ENCODE measurements at regions of chr16 and their contacts with region 1.

Region 1: GRCh38 chr16:30091474-30092372 is at the start of gene TBX6:
- DNase-seq: peak; percentile 73 to 97
- H3K4me3 ChIP-seq: peak within 1 kb of the TSS; percentile 55 to 84 (median 66)
- H3K27ac ChIP-seq: peak within 1 kb of the TSS; percentile 24; the same call in 1 of the 2 replicates
- H3K4me1 ChIP-seq: peaks cover 0 to 16% (median 10%) of the 10 kb centered on the region in 4 experiments; a peak in 6 of 7 replicates
- H3K27me3 ChIP-seq: 0 out of 7 replicates have a peak, but pooled peaks cover 0 to 3% (median 0%) of the 10 kb centered on the region in 4 experiments
- CTCF ChIP-seq: peak; percentile 75 to 76 (median 76)
- EP300 ChIP-seq: no peak
- POLR2A ChIP-seq: peak in 1 of 2 experiments; percentile 8; a peak in 1 of 3 replicates
- RAD21 ChIP-seq: peak; percentile 60 to 70
- total RNA-seq, gene TBX6: 2.3 and 2.8 TPM in 2 replicates

Region 2: DNA sequence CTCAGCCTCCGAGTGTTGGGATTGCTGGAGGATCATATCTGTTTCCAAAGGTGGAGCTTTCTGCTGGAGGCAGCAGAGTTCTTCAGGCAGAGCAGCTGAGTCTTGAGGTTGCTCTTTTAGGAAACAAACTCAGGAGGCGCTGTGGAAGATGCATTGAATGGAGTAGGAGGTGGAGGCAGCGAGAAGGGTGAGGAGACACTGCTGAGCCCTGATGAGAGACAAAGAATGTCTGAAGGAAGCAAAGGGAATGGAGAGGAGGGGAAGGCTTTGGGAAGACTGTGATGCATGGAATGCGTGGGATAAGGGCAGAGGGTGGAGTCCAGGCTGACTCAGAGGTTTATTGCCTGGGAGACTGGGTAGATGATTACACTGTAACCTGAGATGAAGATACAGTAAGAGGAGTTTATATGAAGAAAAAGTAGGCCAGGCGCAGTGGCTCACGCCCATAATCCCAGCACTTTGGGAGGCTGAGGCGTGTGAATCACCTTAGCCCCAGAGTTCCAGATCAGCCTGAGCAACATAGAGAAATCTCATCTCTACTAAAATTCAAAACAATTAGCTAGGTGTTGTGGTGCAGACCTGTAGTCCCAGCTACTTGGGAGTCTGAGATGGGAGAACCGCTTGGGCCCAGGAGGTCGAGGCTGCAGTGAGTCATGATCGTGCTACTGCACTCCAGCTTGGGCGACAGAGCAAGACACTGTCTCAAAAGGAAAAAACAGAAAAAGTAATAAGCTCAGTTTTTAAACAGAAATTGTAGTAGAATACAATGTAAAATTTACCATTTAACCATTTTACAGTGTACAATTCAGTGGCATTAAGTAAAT is 147.7 kb before region 1 on chr16:
- CTCF ChIA-PET with region 1: no interaction called
- POLR2A ChIA-PET with region 1: no interaction called
- DNase-seq: no peak
- H3K4me3 ChIP-seq: no peak overlapping the region
- H3K27ac ChIP-seq: no peak overlapping the region
- H3K4me1 ChIP-seq: no peaks in the 10 kb centered on the region; a peak in 1 of 7 replicates
- H3K27me3 ChIP-seq: peaks cover 0 to 3% (median 0%) of the 10 kb centered on the region in 4 experiments; a peak in 1 of 7 replicates
- CTCF ChIP-seq: peak; percentile 22 to 67 (median 51)
- EP300 ChIP-seq: no peak
- POLR2A ChIP-seq: no peak
- RAD21 ChIP-seq: peak; percentile 25 to 31; a peak in 2 of 4 replicates

Region 3: GRCh38 chr16:30041846-30042267 is 49.9 kb before region 1 on chr16:
- CTCF ChIA-PET with region 1: interaction called, 19 read pairs
- POLR2A ChIA-PET with region 1: no interaction called
- DNase-seq: no peak
- H3K4me3 ChIP-seq: no peak overlapping the region
- H3K27ac ChIP-seq: no peak overlapping the region
- H3K4me1 ChIP-seq: no peaks in the 10 kb centered on the region
- H3K27me3 ChIP-seq: peaks cover 0 to 6% (median 1%) of the 10 kb centered on the region in 4 experiments; a peak in 3 of 7 replicates
- CTCF ChIP-seq: peak in 2 of 3 experiments; percentile 1 to 41; a peak in 2 of 4 replicates
- EP300 ChIP-seq: no peak
- POLR2A ChIP-seq: no peak
- RAD21 ChIP-seq: peak; percentile 10 to 36; a peak in 2 of 4 replicates

Region 4: GRCh38 chr16:30052671-30053372 is 38.9 kb before region 1 on chr16:
- CTCF ChIA-PET with region 1: interaction called, 10 read pairs
- POLR2A ChIA-PET with region 1: interaction called, 7 read pairs
- DNase-seq: peak in 1 of 2 experiments; percentile 98
- H3K4me3 ChIP-seq: peak overlapping the region; percentile 68 to 80 (median 78)
- H3K27ac ChIP-seq: no peak overlapping the region
- H3K4me1 ChIP-seq: peaks cover 0 to 4% (median 2%) of the 10 kb centered on the region in 4 experiments; a peak in 3 of 7 replicates
- H3K27me3 ChIP-seq: peaks cover 0 to 5% (median 2%) of the 10 kb centered on the region in 4 experiments; a peak in 2 of 7 replicates
- CTCF ChIP-seq: no peak
- EP300 ChIP-seq: peak in 1 of 2 experiments; percentile 51; a peak in 1 of 3 replicates
- POLR2A ChIP-seq: no peak
- RAD21 ChIP-seq: no peak

Region 5: GRCh38 chr16:30065143-30065850 is 26.4 kb before region 1 on chr16 and contains the start of gene ALDOA:
- CTCF ChIA-PET with region 1: interaction called, 51 read pairs
- POLR2A ChIA-PET with region 1: interaction called, 353 read pairs
- DNase-seq: peak; percentile 89 to 92
- H3K4me3 ChIP-seq: peak within 1 kb of the TSS; percentile 71 to 92 (median 88)
- H3K27ac ChIP-seq: peak within 1 kb of the TSS; percentile 84
- H3K4me1 ChIP-seq: peaks cover 6 to 27% (median 15%) of the 10 kb centered on the region in 4 experiments
- H3K27me3 ChIP-seq: no peaks in the 10 kb centered on the region
- CTCF ChIP-seq: no peak
- EP300 ChIP-seq: no peak; a peak in 1 of 3 replicates
- POLR2A ChIP-seq: peak; percentile 93 to 95
- RAD21 ChIP-seq: no peak
- total RNA-seq, gene ALDOA: 1,083 and 1,146 TPM in 2 replicates

Region 6: GRCh38 chr16:30075507-30076275 is 16.0 kb before region 1 on chr16 and contains the start of gene PPP4C:
- CTCF ChIA-PET with region 1: interaction called, 51 read pairs
- POLR2A ChIA-PET with region 1: interaction called, 353 read pairs
- DNase-seq: peak in 1 of 2 experiments; percentile 92
- H3K4me3 ChIP-seq: peak within 1 kb of the TSS; percentile 85 to 95 (median 90)
- H3K27ac ChIP-seq: peak within 1 kb of the TSS; percentile 41
- H3K4me1 ChIP-seq: peaks cover 0 to 7% (median 1%) of the 10 kb centered on the region in 4 experiments; a peak in 2 of 7 replicates
- H3K27me3 ChIP-seq: no peaks in the 10 kb centered on the region
- CTCF ChIP-seq: 0 out of 4 replicates have a peak, but pooled peaks of 1 of the 3 experiments have one; percentile 1
- EP300 ChIP-seq: peak in 1 of 2 experiments; percentile 88; a peak in 2 of 3 replicates
- POLR2A ChIP-seq: peak in 1 of 2 experiments; percentile 84; a peak in 2 of 3 replicates
- RAD21 ChIP-seq: no peak
- total RNA-seq, gene PPP4C: 148 TPM in 2 replicates

Region 7: GRCh38 chr16:30104494-30104968 is 12.8 kb after region 1 on chr16:
- CTCF ChIA-PET with region 1: interaction called, 90 read pairs
- POLR2A ChIA-PET with region 1: interaction called, 169 read pairs
- DNase-seq: no peak
- H3K4me3 ChIP-seq: no peak overlapping the region
- H3K27ac ChIP-seq: no peak overlapping the region
- H3K4me1 ChIP-seq: no peaks in the 10 kb centered on the region
- H3K27me3 ChIP-seq: no peaks in the 10 kb centered on the region
- CTCF ChIP-seq: no peak
- EP300 ChIP-seq: no peak
- POLR2A ChIP-seq: peak in 1 of 2 experiments; percentile 52; a peak in 1 of 3 replicates
- RAD21 ChIP-seq: no peak

Region 8: GRCh38 chr16:30149250-30149930 is 57.7 kb after region 1 on chr16:
- CTCF ChIA-PET with region 1: no interaction called
- POLR2A ChIA-PET with region 1: no interaction called
- DNase-seq: no peak
- H3K4me3 ChIP-seq: no peak overlapping the region
- H3K27ac ChIP-seq: no peak overlapping the region
- H3K4me1 ChIP-seq: no peaks in the 10 kb centered on the region
- H3K27me3 ChIP-seq: no peaks in the 10 kb centered on the region
- CTCF ChIP-seq: no peak
- EP300 ChIP-seq: no peak
- POLR2A ChIP-seq: no peak
- RAD21 ChIP-seq: no peak